GM12878 (cell line): ENCODE measurements at regions of chr3 and their contacts with region 1.

Region 1: GRCh38 chr3:157174649-157175498 is 14.9 kb upstream of the CCNL1 start:
- DNase-seq: peak; percentile 97
- ATAC-seq: peak; percentile 94
- H3K4me3 ChIP-seq: peak overlapping the region; percentile 86
- H3K27ac ChIP-seq: peak overlapping the region; percentile 97
- H3K4me1 ChIP-seq: peaks cover 4% of the 10 kb centered on the region; the same call in 1 of the 2 replicates
- H3K27me3 ChIP-seq: no peaks in the 10 kb centered on the region
- CTCF ChIP-seq: no peak
- EP300 ChIP-seq: peak; percentile 42 to 77; a peak in 3 of 4 replicates
- POLR2A ChIP-seq: peak; percentile 97
- RAD21 ChIP-seq: no peak

Region 2: GRCh38 chr3:157154563-157155330 is 20.1 kb before region 1 on chr3:
- CTCF ChIA-PET with region 1: interaction called, 104 read pairs
- POLR2A ChIA-PET with region 1: interaction called, 147 read pairs
- RAD21 ChIA-PET with region 1: interaction called, 81 read pairs
- SMC1A ChIA-PET with region 1: interaction called, 118 read pairs
- in situ Hi-C with region 1: no loop called
- intact Hi-C with region 1: no loop called
- DNase-seq: no peak
- ATAC-seq: no peak
- H3K4me3 ChIP-seq: peak overlapping the region; percentile 72
- H3K27ac ChIP-seq: no peak overlapping the region
- H3K4me1 ChIP-seq: peaks cover 7% of the 10 kb centered on the region; the same call in 1 of the 2 replicates
- H3K27me3 ChIP-seq: no peaks in the 10 kb centered on the region
- CTCF ChIP-seq: no peak; a peak in 1 of 6 replicates
- EP300 ChIP-seq: no peak
- POLR2A ChIP-seq: no peak
- RAD21 ChIP-seq: no peak

Region 3: GRCh38 chr3:157159762-157160657 is 14.9 kb before region 1 on chr3 and contains the start of gene CCNL1:
- CTCF ChIA-PET with region 1: interaction called, 104 read pairs
- POLR2A ChIA-PET with region 1: interaction called, 147 read pairs
- RAD21 ChIA-PET with region 1: interaction called, 81 read pairs
- SMC1A ChIA-PET with region 1: interaction called, 118 read pairs
- in situ Hi-C with region 1: no loop called
- intact Hi-C with region 1: loop called (anchors 1 kb)
- DNase-seq: peak; percentile 82
- ATAC-seq: peak; percentile 88
- H3K4me3 ChIP-seq: peak within 1 kb of the TSS; percentile 72
- H3K27ac ChIP-seq: peak within 1 kb of the TSS; percentile 99
- H3K4me1 ChIP-seq: peaks cover 11% of the 10 kb centered on the region; the same call in 1 of the 2 replicates
- H3K27me3 ChIP-seq: no peaks in the 10 kb centered on the region
- CTCF ChIP-seq: no peak
- EP300 ChIP-seq: peak; percentile 49 to 66; a peak in 2 of 4 replicates
- POLR2A ChIP-seq: peak; percentile 98
- RAD21 ChIP-seq: no peak; the same call in 1 of the 2 replicates
- polyA plus RNA-seq, gene CCNL1: 22.2 to 39.8 TPM

Region 4: DNA sequence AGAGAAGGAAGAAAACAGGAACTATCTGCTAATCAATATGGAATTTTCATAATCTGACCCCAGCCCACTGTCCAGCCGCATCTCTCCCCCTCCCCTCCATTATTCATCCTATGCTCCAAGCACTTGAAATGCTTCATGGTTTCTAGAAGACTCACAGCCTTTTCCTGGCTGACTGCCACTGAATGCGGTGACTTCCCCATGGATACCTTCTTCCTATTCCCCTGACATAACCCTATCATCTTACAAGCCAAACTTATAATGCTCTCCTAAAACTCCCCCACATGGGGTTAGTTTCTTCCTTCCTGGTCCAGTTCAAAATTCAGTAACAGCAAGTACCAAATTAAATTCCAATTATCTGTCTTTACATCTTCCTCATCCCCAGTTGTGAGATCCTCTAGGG is 230.6 kb after region 1 on chr3:
- CTCF ChIA-PET with region 1: no interaction called
- POLR2A ChIA-PET with region 1: no interaction called
- RAD21 ChIA-PET with region 1: no interaction called
- SMC1A ChIA-PET with region 1: no interaction called
- in situ Hi-C with region 1: no loop called
- intact Hi-C with region 1: no loop called
- DNase-seq: no peak
- ATAC-seq: no peak
- H3K4me3 ChIP-seq: no peak overlapping the region
- H3K27ac ChIP-seq: no peak overlapping the region
- H3K4me1 ChIP-seq: no peaks in the 10 kb centered on the region
- H3K27me3 ChIP-seq: no peaks in the 10 kb centered on the region
- CTCF ChIP-seq: no peak
- EP300 ChIP-seq: no peak
- POLR2A ChIP-seq: no peak
- RAD21 ChIP-seq: no peak